Activated T-helper 2 cell treated with anti-CD3 and anti-CD28 coated beads, Interferon-gamma antibody, Interleukin-2, Interleukin-4, amounts not matched to agents 10 μg/mL and 5 μg/mL and 100 μg/mL, durations not matched to agents 14 hours and 24 hours and 36 hours (primary cell): ENCODE measurements at regions of chr1 and their contacts with region 1.

Region 1: GRCh38 chr1:182601416-182601786 is 2.8 kb downstream of the RGS16 start:
- DNase-seq: peak; percentile 48
- H3K4me3 Mint-ChIP-seq: no peak overlapping the region
- H3K27ac Mint-ChIP-seq: no peak overlapping the region
- H3K4me1 Mint-ChIP-seq: peaks cover 18% of the 10 kb centered on the region
- H3K27me3 Mint-ChIP-seq: no peaks in the 10 kb centered on the region

Region 2: GRCh38 chr1:182588500-182589452 is 12.6 kb before region 1 on chr1 and contains the start of gene RNASEL:
- intact Hi-C with region 1: loop called (anchors 1 kb)
- DNase-seq: peak; percentile 19
- H3K4me3 Mint-ChIP-seq: peak within 1 kb of the TSS; percentile 92
- H3K27ac Mint-ChIP-seq: peak within 1 kb of the TSS; percentile 97
- H3K4me1 Mint-ChIP-seq: peaks cover 30% of the 10 kb centered on the region
- H3K27me3 Mint-ChIP-seq: peaks cover 6% of the 10 kb centered on the region
- total RNA-seq, gene RNASEL: 3.6 and 4.8 TPM in 2 replicates

Region 3: GRCh38 chr1:182629499-182630096 is 28.2 kb after region 1 on chr1:
- intact Hi-C with region 1: loop called (anchors 1 kb)
- DNase-seq: peak; percentile 16
- H3K4me3 Mint-ChIP-seq: no peak overlapping the region
- H3K27ac Mint-ChIP-seq: peak overlapping the region; percentile 56
- H3K4me1 Mint-ChIP-seq: peaks cover 61% of the 10 kb centered on the region
- H3K27me3 Mint-ChIP-seq: peaks cover 21% of the 10 kb centered on the region

Region 4: DNA sequence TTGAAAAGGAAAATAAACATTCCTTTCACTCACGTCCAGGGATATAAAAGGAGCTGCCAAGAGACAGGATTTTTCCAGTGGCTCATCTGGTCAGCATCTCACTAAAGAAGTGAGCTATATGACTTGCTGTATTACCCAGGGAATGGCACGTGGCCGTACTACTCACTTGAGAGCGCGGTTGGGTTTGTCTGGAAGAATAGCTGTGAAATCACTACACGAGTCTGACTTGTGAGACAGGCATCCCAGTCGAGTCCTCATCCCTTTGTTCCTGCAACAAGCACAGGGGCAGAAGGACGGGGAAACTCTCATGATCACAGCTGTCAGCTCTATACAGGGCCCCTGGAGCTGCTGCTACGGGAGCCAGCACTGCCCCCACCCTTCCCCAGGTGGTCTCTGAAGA is 65.3 kb after region 1 on chr1:
- intact Hi-C with region 1: no loop called
- DNase-seq: no peak
- H3K4me3 Mint-ChIP-seq: no peak overlapping the region
- H3K27ac Mint-ChIP-seq: no peak overlapping the region
- H3K4me1 Mint-ChIP-seq: no peaks in the 10 kb centered on the region
- H3K27me3 Mint-ChIP-seq: peaks cover 37% of the 10 kb centered on the region

Region 5: DNA sequence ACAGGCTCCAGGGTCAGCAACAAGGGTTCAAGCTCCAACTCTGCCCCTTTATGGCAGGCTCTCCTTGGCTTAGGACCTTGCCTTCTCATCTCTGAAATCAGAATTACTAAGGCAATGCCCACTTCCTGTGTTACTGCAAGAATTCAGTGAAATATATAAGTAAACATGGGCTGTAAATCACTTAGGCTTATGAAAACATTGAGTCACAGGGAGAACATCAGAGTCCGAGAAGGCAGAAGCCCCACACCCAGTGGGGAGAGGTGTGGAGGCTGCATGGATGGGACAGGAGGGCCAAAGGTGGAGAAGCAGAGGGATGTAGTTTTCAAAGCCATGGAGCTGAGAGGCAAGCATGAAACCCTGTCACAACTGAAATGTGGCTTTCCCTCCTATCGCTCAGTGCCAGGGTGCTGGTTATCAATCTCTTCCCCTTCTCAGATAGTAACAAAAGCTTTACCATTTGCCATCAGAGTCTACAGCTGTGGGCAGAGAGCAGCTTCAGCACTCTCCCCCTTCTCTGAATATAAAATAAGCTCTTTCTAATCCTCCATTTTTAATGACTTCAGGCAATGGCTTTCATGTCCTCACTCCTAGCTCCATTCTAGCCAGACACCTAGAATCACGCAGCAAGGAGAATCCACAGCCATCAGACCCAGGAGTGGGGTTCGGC is 79.6 kb after region 1 on chr1:
- intact Hi-C with region 1: no loop called
- DNase-seq: no peak
- H3K4me3 Mint-ChIP-seq: no peak overlapping the region
- H3K27ac Mint-ChIP-seq: no peak overlapping the region
- H3K4me1 Mint-ChIP-seq: peaks cover 7% of the 10 kb centered on the region
- H3K27me3 Mint-ChIP-seq: peaks cover 17% of the 10 kb centered on the region

Region 6: DNA sequence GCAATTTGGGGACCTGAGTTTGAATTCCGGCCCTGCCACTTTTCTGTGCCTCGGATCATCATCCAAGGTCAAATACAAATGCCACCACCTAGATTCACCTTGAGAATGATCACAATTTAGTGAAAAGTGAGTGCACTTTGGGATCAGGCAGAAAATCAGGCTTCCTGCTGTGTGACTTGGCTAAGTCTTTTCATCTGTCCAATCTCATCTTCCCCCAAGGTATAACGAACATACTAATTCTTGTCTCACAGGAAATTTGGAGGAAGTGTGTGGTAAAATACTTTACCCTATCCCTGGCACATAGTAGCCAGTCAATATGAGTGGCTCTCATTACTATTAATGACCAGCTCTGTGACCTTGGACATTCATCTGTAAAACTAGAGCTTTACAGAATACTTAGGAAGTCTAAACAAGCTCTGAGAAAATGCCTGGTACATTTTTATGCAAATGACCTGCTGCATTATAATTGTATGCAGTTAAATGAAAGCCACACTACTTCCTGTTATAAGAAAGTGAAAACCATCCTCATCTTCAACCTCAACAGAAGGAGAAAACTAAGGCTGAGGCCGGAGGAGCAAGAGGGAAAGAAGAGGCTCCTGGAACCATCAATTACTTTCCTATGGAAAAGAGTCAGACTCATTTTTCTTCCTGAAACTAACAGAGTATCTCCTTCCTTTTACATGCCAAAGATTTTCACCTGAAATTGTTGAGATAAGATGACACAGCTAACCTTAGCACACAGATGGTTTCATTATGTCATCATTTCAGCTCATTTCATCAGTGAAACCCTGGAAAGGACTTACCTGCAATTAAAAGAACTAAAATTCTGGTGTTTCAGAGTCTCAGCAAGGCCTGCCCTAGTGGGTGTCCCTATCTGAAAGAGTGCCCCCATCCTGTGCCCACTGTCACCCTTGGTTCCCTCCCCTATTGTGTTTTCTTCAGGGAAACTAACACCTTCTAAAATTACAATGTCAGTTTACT is 115.6 kb after region 1 on chr1:
- intact Hi-C with region 1: loop called (anchors 1 kb)
- DNase-seq: no peak
- H3K4me3 Mint-ChIP-seq: no peak overlapping the region
- H3K27ac Mint-ChIP-seq: peak overlapping the region; percentile 4
- H3K4me1 Mint-ChIP-seq: peaks cover 52% of the 10 kb centered on the region
- H3K27me3 Mint-ChIP-seq: peaks cover 3% of the 10 kb centered on the region

Region 7: DNA sequence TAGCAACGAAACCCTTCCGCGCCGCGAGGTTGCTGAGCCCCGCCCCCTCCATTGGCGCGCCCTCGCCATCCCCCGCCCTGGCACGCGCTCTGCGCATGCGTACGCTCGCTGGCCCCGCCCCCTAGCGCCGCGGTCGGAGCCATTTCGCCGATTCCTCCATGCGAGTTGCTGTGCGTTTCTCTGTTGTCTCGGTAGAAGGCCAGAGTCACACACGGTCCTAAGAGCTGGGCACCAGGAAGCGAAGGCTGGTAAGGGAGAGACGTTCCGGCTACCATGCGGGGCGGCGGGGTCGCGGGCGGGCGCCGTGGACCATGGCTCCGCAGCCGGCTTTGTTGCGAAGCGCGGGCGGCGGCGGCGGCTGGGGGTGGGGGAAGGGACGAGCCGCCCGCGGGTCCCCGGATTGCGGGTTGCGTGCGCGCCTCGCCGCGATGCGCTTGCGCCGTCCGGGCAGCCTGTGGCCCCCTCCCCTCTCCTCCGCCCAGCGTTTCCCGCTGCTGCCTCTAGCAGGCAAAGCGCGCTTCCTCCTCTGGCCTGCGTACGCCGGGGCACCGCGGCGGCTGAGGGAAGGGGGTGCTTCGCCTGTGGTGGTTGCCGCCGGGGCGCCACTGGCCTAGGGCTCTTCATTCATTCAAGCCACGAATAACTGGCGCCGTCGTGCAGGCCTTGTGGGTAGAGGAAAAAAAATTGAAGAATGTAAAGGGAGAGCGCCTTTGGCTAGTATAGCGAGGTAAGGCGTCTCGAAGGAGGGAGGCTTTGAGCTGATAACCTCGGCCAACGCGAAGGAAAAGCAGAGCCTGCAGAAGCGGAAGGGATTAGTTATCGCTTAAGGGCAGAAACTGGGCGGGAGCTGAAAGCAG is 238.0 kb after region 1 on chr1 and contains the start of gene DHX9:
- intact Hi-C with region 1: loop called (anchors 2 kb)
- DNase-seq: peak; percentile 93
- H3K4me3 Mint-ChIP-seq: peak within 1 kb of the TSS; percentile 96
- H3K27ac Mint-ChIP-seq: peak within 1 kb of the TSS; percentile 98
- H3K4me1 Mint-ChIP-seq: peaks cover 41% of the 10 kb centered on the region
- H3K27me3 Mint-ChIP-seq: peaks cover under 1% of the 10 kb centered on the region
- total RNA-seq, gene DHX9: 302 and 322 TPM in 2 replicates